CD8-positive, alpha-beta T cell (primary cell): ENCODE measurements at regions of chrX and their contacts with region 1.

Region 1: GRCh38 chrX:24054182-24055042 is at the start of gene EIF2S3:
- DNase-seq: peak; percentile 69 to 94 (median 86)
- ATAC-seq: peak; percentile 82
- H3K4me3 ChIP-seq: peak within 1 kb of the TSS; percentile 87 to 92
- H3K4me3 Mint-ChIP-seq: no peak within 1 kb of the TSS
- H3K27ac ChIP-seq: peak within 1 kb of the TSS; percentile 91 to 96
- H3K27ac Mint-ChIP-seq: peak within 1 kb of the TSS; percentile 99
- H3K4me1 ChIP-seq: peaks cover 3% of the 10 kb centered on the region
- H3K4me1 Mint-ChIP-seq: peaks cover 6% of the 10 kb centered on the region
- H3K27me3 ChIP-seq: no peaks in the 10 kb centered on the region
- H3K27me3 Mint-ChIP-seq: no peaks in the 10 kb centered on the region
- CTCF ChIP-seq: no peak
- total RNA-seq, gene EIF2S3: 180 to 184 TPM

Region 2: GRCh38 chrX:23694606-23695005 is 359.8 kb before region 1 on chrX:
- CTCF ChIA-PET with region 1: interaction called, 3 read pairs
- POLR2A ChIA-PET with region 1: no interaction called
- intact Hi-C with region 1: loop called in 1 of 2 experiments (anchors 2 kb)
- DNase-seq: peak in 8 of 9 experiments; percentile 8 to 69 (median 36)
- ATAC-seq: peak; percentile 71
- H3K4me3 ChIP-seq: no peak overlapping the region
- H3K4me3 Mint-ChIP-seq: no peak overlapping the region
- H3K27ac ChIP-seq: no peak overlapping the region
- H3K27ac Mint-ChIP-seq: no peak overlapping the region
- H3K4me1 ChIP-seq: no peaks in the 10 kb centered on the region
- H3K4me1 Mint-ChIP-seq: peaks cover 4% of the 10 kb centered on the region
- H3K27me3 ChIP-seq: no peaks in the 10 kb centered on the region
- H3K27me3 Mint-ChIP-seq: no peaks in the 10 kb centered on the region
- CTCF ChIP-seq: peak; percentile 39

Region 3: GRCh38 chrX:23901805-23902204 is 152.6 kb before region 1 on chrX:
- CTCF ChIA-PET with region 1: interaction called, 26 read pairs
- POLR2A ChIA-PET with region 1: interaction called, 22 read pairs
- intact Hi-C with region 1: loop called in 1 of 2 experiments (anchors 1 kb)
- DNase-seq: peak in 6 of 9 experiments; percentile 6 to 66 (median 34)
- ATAC-seq: peak; percentile 80
- H3K4me3 ChIP-seq: no peak overlapping the region
- H3K4me3 Mint-ChIP-seq: no peak overlapping the region
- H3K27ac ChIP-seq: no peak overlapping the region
- H3K27ac Mint-ChIP-seq: no peak overlapping the region
- H3K4me1 ChIP-seq: peaks cover 6% of the 10 kb centered on the region
- H3K4me1 Mint-ChIP-seq: peaks cover 5% of the 10 kb centered on the region
- H3K27me3 ChIP-seq: no peaks in the 10 kb centered on the region
- H3K27me3 Mint-ChIP-seq: no peaks in the 10 kb centered on the region
- CTCF ChIP-seq: no peak

Region 4: GRCh38 chrX:24024819-24025740 is 29.3 kb before region 1 on chrX:
- CTCF ChIA-PET with region 1: interaction called, 7 read pairs
- POLR2A ChIA-PET with region 1: interaction called, 28 read pairs
- intact Hi-C with region 1: loop called (anchors 1 kb)
- DNase-seq: peak; percentile 62 to 89 (median 75)
- ATAC-seq: peak; percentile 90
- H3K4me3 ChIP-seq: peak overlapping the region; percentile 67 to 82
- H3K4me3 Mint-ChIP-seq: peak overlapping the region; percentile 87
- H3K27ac ChIP-seq: peak overlapping the region; percentile 85 to 87
- H3K27ac Mint-ChIP-seq: peak overlapping the region; percentile 64
- H3K4me1 ChIP-seq: peaks cover 13% of the 10 kb centered on the region
- H3K4me1 Mint-ChIP-seq: peaks cover 24% of the 10 kb centered on the region
- H3K27me3 ChIP-seq: no peaks in the 10 kb centered on the region
- H3K27me3 Mint-ChIP-seq: no peaks in the 10 kb centered on the region
- CTCF ChIP-seq: no peak

Region 5: GRCh38 chrX:24464836-24465531 is 410.6 kb after region 1 on chrX and contains the start of gene PDK3:
- CTCF ChIA-PET with region 1: no interaction called
- POLR2A ChIA-PET with region 1: no interaction called
- intact Hi-C with region 1: loop called in 1 of 2 experiments (anchors 10 kb)
- DNase-seq: peak; percentile 77 to 94 (median 87)
- ATAC-seq: peak; percentile 94
- H3K4me3 ChIP-seq: peak within 1 kb of the TSS; percentile 60 to 81
- H3K4me3 Mint-ChIP-seq: peak within 1 kb of the TSS; percentile 83
- H3K27ac ChIP-seq: peak within 1 kb of the TSS; percentile 77 to 86
- H3K27ac Mint-ChIP-seq: peak within 1 kb of the TSS; percentile 94
- H3K4me1 ChIP-seq: peaks cover 36% of the 10 kb centered on the region
- H3K4me1 Mint-ChIP-seq: peaks cover 39% of the 10 kb centered on the region
- H3K27me3 ChIP-seq: no peaks in the 10 kb centered on the region
- H3K27me3 Mint-ChIP-seq: no peaks in the 10 kb centered on the region
- CTCF ChIP-seq: no peak
- total RNA-seq, gene PDK3: 13.3 to 16.8 TPM